Activated CD4-positive, alpha-beta T cell treated with anti-CD3 and anti-CD28 coated beads, Interleukin-2, amount 10 ng/mL, durations not matched to agents 24 days and 14 days (primary cell): ENCODE measurements at regions of chr10 and their contacts with region 1.

Region 1: DNA sequence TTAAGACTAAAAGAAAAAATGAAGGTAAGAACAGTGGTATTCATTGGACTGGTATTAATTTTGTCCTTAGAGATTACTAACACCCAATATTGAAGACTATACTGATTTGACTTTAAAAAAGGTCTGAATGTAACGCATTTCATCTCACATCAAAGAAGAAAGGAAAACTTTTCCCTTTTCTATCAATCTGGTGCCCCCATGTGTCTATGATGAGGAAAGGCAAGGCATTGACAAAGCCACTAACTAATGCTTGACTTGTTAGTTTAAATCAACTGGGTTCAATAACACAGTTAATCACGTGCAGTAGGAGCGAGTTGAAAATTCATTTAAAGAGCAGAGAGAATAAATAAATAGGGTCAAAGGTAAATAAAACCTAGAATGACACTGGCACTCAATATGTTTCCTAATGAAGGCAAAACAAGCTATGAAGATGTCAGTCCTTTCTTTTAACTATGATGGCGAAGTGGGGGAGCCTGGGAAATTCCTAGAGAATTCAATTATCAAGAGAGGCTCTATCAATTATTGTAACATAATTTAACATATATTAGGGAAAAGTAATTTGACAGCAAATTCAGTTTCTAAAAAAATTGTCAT is 180.9 kb downstream of the ANK3 start:
- DNase-seq: no peak
- H3K4me3 Mint-ChIP-seq: no peak overlapping the region
- H3K27ac Mint-ChIP-seq: peak overlapping the region; percentile 54
- H3K4me1 Mint-ChIP-seq: peaks cover 31% of the 10 kb centered on the region
- H3K27me3 Mint-ChIP-seq: no peaks in the 10 kb centered on the region

Region 2: GRCh38 chr10:60114765-60115586 is 93.8 kb before region 1 on chr10:
- intact Hi-C with region 1: loop called (anchors 1 kb)
- DNase-seq: peak; percentile 75
- H3K4me3 Mint-ChIP-seq: no peak overlapping the region
- H3K27ac Mint-ChIP-seq: no peak overlapping the region
- H3K4me1 Mint-ChIP-seq: no peaks in the 10 kb centered on the region
- H3K27me3 Mint-ChIP-seq: no peaks in the 10 kb centered on the region

Region 3: GRCh38 chr10:60434418-60435046 is 225.8 kb after region 1 on chr10:
- intact Hi-C with region 1: loop called (anchors 1 kb)
- DNase-seq: no peak
- H3K4me3 Mint-ChIP-seq: no peak overlapping the region
- H3K27ac Mint-ChIP-seq: no peak overlapping the region
- H3K4me1 Mint-ChIP-seq: peaks cover 2% of the 10 kb centered on the region
- H3K27me3 Mint-ChIP-seq: no peaks in the 10 kb centered on the region